Activated naive CD4-positive, alpha-beta T cell treated with anti-CD3 and anti-CD28 coated beads for 36 hours (primary cell): ENCODE measurements at regions of chr21 and their contacts with region 1.

Region 1: DNA sequence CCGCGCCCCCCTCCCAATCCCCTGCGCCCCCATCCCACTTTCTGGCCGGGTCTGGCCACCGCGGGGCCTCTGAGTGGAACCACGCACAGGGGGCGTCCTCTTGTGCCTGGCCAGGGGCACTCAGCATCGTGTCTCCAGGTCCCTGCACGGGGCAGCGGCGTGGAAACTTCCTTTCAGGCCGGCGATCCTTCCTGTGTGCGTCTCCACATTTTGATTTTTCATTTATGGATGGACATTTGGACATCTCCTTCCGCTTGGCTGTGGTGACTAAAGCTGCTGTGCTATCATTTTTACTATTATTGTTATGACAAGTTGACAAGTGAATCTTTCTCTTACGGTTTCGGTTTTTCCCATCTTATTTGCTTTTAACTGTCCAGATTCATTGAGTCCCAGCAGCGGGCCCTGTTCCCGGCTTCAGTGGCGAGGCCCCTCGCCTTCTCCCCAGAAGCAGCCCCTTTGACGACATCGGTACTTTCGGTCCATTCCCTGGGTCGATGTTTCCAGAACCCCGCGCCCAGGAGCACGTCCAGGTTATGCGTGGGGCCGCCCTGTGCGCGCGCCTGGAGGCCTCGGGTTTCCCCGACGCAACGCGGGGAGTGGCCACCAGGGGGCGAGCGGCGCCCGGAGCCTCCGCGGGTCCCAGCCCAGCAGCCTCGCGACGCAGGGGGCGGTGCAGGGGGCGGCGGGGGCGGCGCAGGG is 12.4 kb upstream of the SLC19A1 start:
- DNase-seq: peak; percentile 88
- H3K4me3 Mint-ChIP-seq: peak overlapping the region; percentile 89
- H3K27ac Mint-ChIP-seq: peak overlapping the region; percentile 91
- H3K4me1 Mint-ChIP-seq: peaks cover 27% of the 10 kb centered on the region
- H3K27me3 Mint-ChIP-seq: no peaks in the 10 kb centered on the region

Region 2: GRCh38 chr21:44405948-44406872 is 1148.4 kb before region 1 on chr21:
- CTCF ChIA-PET with region 1: no interaction called
- intact Hi-C with region 1: no loop called
- DNase-seq: no peak
- H3K4me3 Mint-ChIP-seq: no peak overlapping the region
- H3K27ac Mint-ChIP-seq: no peak overlapping the region
- H3K4me1 Mint-ChIP-seq: peaks cover 8% of the 10 kb centered on the region
- H3K27me3 Mint-ChIP-seq: no peaks in the 10 kb centered on the region

Region 3: GRCh38 chr21:45287438-45288391 is 266.9 kb before region 1 on chr21 and contains the start of gene POFUT2:
- CTCF ChIA-PET with region 1: no interaction called
- intact Hi-C with region 1: loop called (anchors 5 kb)
- DNase-seq: peak; percentile 98
- H3K4me3 Mint-ChIP-seq: peak within 1 kb of the TSS; percentile 76
- H3K27ac Mint-ChIP-seq: no peak within 1 kb of the TSS
- H3K4me1 Mint-ChIP-seq: peaks cover 13% of the 10 kb centered on the region
- H3K27me3 Mint-ChIP-seq: no peaks in the 10 kb centered on the region
- total RNA-seq, gene POFUT2: 14.4 to 15.9 TPM

Region 4: GRCh38 chr21:45542242-45542666 is 12.4 kb before region 1 on chr21 and contains the start of gene SLC19A1:
- CTCF ChIA-PET with region 1: no interaction called
- intact Hi-C with region 1: loop called (anchors 1 kb)
- DNase-seq: peak; percentile 68
- H3K4me3 Mint-ChIP-seq: peak within 1 kb of the TSS; percentile 74
- H3K27ac Mint-ChIP-seq: peak within 1 kb of the TSS; percentile 77
- H3K4me1 Mint-ChIP-seq: peaks cover 22% of the 10 kb centered on the region
- H3K27me3 Mint-ChIP-seq: no peaks in the 10 kb centered on the region
- total RNA-seq, gene SLC19A1: 32.2 to 33.0 TPM

Region 5: GRCh38 chr21:45596704-45597318 is 42.2 kb after region 1 on chr21:
- CTCF ChIA-PET with region 1: interaction called, 17 read pairs
- intact Hi-C with region 1: loop called (anchors 1 kb)
- DNase-seq: peak; percentile 92
- H3K4me3 Mint-ChIP-seq: no peak overlapping the region
- H3K27ac Mint-ChIP-seq: no peak overlapping the region
- H3K4me1 Mint-ChIP-seq: peaks cover 28% of the 10 kb centered on the region
- H3K27me3 Mint-ChIP-seq: no peaks in the 10 kb centered on the region

Region 6: GRCh38 chr21:45698493-45699184 is 144.0 kb after region 1 on chr21:
- CTCF ChIA-PET with region 1: no interaction called
- intact Hi-C with region 1: loop called (anchors 2 kb)
- DNase-seq: peak; percentile 56
- H3K4me3 Mint-ChIP-seq: no peak overlapping the region
- H3K27ac Mint-ChIP-seq: peak overlapping the region; percentile 79
- H3K4me1 Mint-ChIP-seq: peaks cover 38% of the 10 kb centered on the region
- H3K27me3 Mint-ChIP-seq: no peaks in the 10 kb centered on the region

Region 7: DNA sequence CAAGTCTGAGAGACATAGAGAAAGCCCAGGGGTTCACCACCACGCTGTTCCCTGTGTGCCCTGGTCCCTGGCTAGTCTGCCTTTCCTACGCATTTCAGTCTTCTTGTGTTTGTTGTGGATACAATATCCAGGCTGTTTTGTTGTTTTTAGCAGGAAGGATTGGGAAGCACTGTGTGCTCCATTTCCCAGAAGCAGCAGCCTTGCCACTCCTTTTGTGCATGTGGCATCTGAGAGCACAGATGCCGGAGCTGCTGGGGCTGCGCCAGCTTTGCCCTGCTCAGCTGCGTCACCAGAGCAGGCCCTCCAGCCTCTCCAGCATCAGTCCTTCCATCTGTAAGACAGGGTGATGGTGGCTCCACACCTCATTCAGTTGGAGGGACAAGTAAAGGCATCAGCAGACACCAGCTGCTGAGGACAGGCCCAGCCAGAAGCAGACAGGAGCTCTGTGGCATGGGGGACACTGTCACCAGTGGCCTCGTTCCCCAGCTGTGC is 332.5 kb after region 1 on chr21:
- CTCF ChIA-PET with region 1: no interaction called
- intact Hi-C with region 1: loop called (anchors 2 kb)
- DNase-seq: no peak
- H3K4me3 Mint-ChIP-seq: no peak overlapping the region
- H3K27ac Mint-ChIP-seq: peak overlapping the region; percentile 27
- H3K4me1 Mint-ChIP-seq: peaks cover 66% of the 10 kb centered on the region
- H3K27me3 Mint-ChIP-seq: no peaks in the 10 kb centered on the region